ENCODE measurements at regions of chr20 and their contacts with region 1.

Region 1: GRCh38 chr20:50165684-50166554 is 12.4 kb upstream of the PEDS1 start:
- DNase-seq: peak; percentile 99 to 100 (median 100)
- H3K4me3 ChIP-seq: peak overlapping the region in 5 of 7 experiments; percentile 34 to 67 (median 47)
- H3K27ac ChIP-seq: peak overlapping the region; percentile 62 to 86
- H3K4me1 ChIP-seq: peaks cover 3 to 17% (median 13%) of the 10 kb centered on the region in 4 experiments
- H3K27me3 ChIP-seq: no peaks in the 10 kb centered on the region

Region 2: GRCh38 chr20:50115591-50116372 is 50.1 kb before region 1 on chr20:
- CTCF ChIA-PET with region 1: interaction called, 335 read pairs
- POLR2A ChIA-PET with region 1: interaction called, 6 read pairs
- DNase-seq: peak; percentile 93 to 95 (median 94)
- H3K4me3 ChIP-seq: peak overlapping the region in 6 of 7 experiments; percentile 69 to 96 (median 78)
- H3K27ac ChIP-seq: peak overlapping the region; percentile 40 to 71
- H3K4me1 ChIP-seq: peaks cover 33 to 54% (median 47%) of the 10 kb centered on the region in 4 experiments
- H3K27me3 ChIP-seq: no peaks in the 10 kb centered on the region

Region 3: GRCh38 chr20:50138479-50139393 is 27.2 kb before region 1 on chr20:
- CTCF ChIA-PET with region 1: interaction called, 11 read pairs
- POLR2A ChIA-PET with region 1: no interaction called
- DNase-seq: no peak
- H3K4me3 ChIP-seq: no peak overlapping the region
- H3K27ac ChIP-seq: no peak overlapping the region
- H3K4me1 ChIP-seq: peaks cover 0 to 2% (median 0%) of the 10 kb centered on the region in 4 experiments
- H3K27me3 ChIP-seq: no peaks in the 10 kb centered on the region

Region 4: DNA sequence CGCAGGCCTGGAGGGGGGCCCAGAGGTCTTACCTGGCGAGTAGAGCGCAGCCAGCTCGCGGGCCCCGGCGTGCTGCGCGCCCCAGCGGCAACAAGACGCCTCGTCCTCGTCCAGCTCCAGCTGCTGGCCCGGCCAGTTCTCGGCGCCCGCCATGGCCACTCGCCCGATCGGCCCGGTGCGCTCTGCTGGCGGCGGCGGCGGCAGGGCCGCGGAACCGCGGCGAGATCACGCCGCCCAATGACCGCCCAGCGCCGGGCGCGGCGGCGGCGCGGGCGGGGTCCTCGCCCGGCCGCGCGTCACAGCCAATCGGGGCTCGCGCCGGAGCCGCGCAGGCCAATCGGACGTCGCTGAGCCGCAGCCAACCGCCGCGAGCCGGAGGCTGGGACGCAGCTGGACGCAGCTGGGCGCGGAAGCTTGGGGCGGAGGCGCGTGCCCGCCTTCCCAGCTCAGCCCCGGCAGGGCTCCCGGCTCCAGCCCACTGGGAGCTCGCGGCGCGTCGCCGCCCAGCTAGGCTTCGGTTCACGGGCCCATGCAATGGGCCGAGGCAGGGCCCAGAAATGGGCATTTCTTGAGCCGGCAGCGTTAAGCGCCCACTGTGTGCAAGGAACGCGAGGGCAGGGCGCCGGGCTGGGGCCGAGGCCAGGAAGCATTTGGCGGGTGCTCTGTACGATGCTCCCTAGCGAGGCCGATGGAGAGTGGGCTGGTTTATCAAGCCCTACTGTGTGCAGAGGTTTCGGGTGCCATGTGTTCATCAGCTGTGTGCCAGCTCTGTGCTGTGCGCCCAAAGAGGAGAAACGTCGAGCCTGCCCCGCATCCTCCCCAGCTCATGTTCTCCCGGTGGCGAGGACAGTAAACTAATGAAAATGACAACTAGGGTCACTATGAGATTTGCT is 12.2 kb before region 1 on chr20 and contains the start of gene PEDS1:
- CTCF ChIA-PET with region 1: interaction called, 30 read pairs
- POLR2A ChIA-PET with region 1: interaction called, 4 read pairs
- DNase-seq: peak; percentile 80 to 89 (median 87)
- H3K4me3 ChIP-seq: peak within 1 kb of the TSS; percentile 67 to 94 (median 81)
- H3K27ac ChIP-seq: peak within 1 kb of the TSS; percentile 46 to 86
- H3K4me1 ChIP-seq: peaks cover 3 to 31% (median 27%) of the 10 kb centered on the region in 4 experiments
- H3K27me3 ChIP-seq: no peaks in the 10 kb centered on the region